Calu3 (cell line): ENCODE measurements at regions of chr3 and their contacts with region 1.

Region 1: GRCh38 chr3:72938471-72939265 is 50.8 kb downstream of the GXYLT2 start:
- DNase-seq: peak; percentile 29
- H3K4me3 Mint-ChIP-seq: no peak overlapping the region
- H3K27ac Mint-ChIP-seq: no peak overlapping the region
- H3K4me1 Mint-ChIP-seq: no peaks in the 10 kb centered on the region
- H3K27me3 Mint-ChIP-seq: peaks cover 13% of the 10 kb centered on the region
- CTCF ChIP-seq: peak; percentile 58

Region 2: DNA sequence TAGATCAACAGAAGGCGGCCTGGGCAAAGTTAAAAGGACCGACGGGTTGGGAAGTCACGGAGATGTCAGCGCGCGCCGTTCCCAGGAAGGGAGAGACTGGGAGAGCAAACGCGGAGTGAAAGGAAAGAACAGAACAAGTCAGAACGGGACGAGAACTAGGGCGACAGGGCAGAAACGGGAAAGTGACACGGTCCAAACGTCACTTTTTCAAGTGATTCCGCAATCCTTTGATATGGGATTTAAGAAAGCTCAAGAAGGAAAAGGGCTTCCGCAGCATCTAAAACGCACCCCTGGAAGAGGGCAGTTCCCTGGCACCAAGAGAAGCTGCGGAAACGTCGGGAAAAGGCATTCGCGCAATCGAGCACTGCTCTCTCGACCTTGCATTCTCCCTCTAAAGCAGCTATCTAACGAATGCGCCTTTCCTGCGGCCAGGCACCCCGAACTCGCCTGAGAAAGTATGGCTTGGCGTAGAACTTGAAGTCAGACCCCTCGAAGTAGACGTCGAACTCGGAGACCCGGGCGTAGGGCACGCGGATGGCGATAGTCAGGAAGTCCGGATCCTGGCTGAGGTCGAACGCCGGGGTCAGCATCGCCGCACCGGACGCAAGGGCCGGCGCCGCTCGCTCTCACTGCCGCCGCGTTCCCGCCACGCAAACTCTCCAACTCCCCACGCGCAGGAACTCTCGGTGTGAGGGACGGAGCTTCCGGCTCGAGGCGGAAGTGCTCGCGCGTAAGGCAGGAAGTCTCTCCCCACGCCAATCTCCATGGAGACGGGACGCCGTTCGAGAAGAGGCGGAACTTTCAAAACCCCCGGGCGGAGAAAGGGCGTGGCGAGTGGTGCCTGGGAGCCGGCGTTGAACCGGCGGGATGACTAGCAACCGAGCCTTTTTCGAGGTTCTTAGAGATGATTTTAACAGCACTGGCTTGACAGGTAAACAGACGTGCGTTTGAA is 90.6 kb before region 1 on chr3 and contains the start of gene SHQ1:
- CTCF ChIA-PET with region 1: interaction called, 3 read pairs
- intact Hi-C with region 1: loop called (anchors 5 kb)
- DNase-seq: peak; percentile 93
- H3K4me3 Mint-ChIP-seq: peak within 1 kb of the TSS; percentile 90
- H3K27ac Mint-ChIP-seq: peak within 1 kb of the TSS; percentile 75
- H3K4me1 Mint-ChIP-seq: peaks cover 24% of the 10 kb centered on the region
- H3K27me3 Mint-ChIP-seq: no peaks in the 10 kb centered on the region
- CTCF ChIP-seq: no peak
- total RNA-seq, gene SHQ1: 19.4 and 22.3 TPM in 2 replicates

Region 3: GRCh38 chr3:72862314-72863090 is 76.2 kb before region 1 on chr3:
- CTCF ChIA-PET with region 1: no interaction called
- intact Hi-C with region 1: no loop called
- DNase-seq: no peak
- H3K4me3 Mint-ChIP-seq: no peak overlapping the region
- H3K27ac Mint-ChIP-seq: no peak overlapping the region
- H3K4me1 Mint-ChIP-seq: no peaks in the 10 kb centered on the region
- H3K27me3 Mint-ChIP-seq: peaks cover 9% of the 10 kb centered on the region
- CTCF ChIP-seq: no peak

Region 4: GRCh38 chr3:72996473-72997333 is 58.0 kb after region 1 on chr3 and contains the start of gene PPP4R2:
- CTCF ChIA-PET with region 1: no interaction called
- intact Hi-C with region 1: loop called (anchors 1 kb)
- DNase-seq: peak; percentile 91
- H3K4me3 Mint-ChIP-seq: peak within 1 kb of the TSS; percentile 96
- H3K27ac Mint-ChIP-seq: peak within 1 kb of the TSS; percentile 89
- H3K4me1 Mint-ChIP-seq: peaks cover 10% of the 10 kb centered on the region
- H3K27me3 Mint-ChIP-seq: no peaks in the 10 kb centered on the region
- CTCF ChIP-seq: no peak
- total RNA-seq, gene PPP4R2: 68.4 and 89.0 TPM in 2 replicates

Region 5: DNA sequence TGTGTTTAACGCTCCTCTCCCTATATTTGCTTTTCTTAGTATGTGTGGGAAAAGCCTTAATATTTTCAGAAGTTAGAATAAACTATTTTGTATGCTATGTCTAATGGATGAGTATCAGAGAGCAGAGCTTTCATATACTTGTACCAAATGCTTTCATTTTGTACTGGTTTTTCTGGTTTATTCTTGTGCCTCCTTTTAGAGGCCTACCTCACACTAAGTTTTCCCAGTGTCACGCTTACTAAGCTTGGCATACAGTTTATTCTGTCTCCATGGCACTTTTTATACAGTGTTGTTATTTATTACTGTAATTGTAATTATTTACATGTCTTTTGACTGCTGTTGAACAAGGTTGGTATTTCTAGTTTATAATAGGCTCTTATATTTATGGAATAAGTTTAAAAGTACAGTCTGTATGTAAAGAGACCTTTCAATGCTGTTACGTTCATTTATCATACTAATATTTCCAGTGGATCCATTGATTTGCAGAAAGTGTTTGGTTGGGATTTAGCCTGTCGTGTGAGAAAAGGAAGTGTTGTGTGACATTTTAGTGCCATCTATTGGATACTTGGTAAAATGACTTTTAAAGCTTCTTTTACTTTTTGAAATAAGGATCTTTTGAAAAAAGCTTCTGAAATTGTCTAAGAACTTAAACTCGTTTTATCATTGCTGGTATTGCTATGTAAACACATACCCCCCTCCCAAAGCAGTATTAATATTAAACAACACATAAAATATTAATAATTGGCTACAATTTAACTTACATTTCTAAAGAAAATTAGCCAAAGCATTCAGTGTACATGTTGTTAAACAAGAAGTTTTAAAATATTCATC is 117.6 kb after region 1 on chr3:
- CTCF ChIA-PET with region 1: interaction called, 12 read pairs
- intact Hi-C with region 1: loop called (anchors 1 kb)
- DNase-seq: no peak
- H3K4me3 Mint-ChIP-seq: no peak overlapping the region
- H3K27ac Mint-ChIP-seq: peak overlapping the region; percentile 68
- H3K4me1 Mint-ChIP-seq: peaks cover 8% of the 10 kb centered on the region
- H3K27me3 Mint-ChIP-seq: no peaks in the 10 kb centered on the region
- CTCF ChIP-seq: no peak

Region 6: DNA sequence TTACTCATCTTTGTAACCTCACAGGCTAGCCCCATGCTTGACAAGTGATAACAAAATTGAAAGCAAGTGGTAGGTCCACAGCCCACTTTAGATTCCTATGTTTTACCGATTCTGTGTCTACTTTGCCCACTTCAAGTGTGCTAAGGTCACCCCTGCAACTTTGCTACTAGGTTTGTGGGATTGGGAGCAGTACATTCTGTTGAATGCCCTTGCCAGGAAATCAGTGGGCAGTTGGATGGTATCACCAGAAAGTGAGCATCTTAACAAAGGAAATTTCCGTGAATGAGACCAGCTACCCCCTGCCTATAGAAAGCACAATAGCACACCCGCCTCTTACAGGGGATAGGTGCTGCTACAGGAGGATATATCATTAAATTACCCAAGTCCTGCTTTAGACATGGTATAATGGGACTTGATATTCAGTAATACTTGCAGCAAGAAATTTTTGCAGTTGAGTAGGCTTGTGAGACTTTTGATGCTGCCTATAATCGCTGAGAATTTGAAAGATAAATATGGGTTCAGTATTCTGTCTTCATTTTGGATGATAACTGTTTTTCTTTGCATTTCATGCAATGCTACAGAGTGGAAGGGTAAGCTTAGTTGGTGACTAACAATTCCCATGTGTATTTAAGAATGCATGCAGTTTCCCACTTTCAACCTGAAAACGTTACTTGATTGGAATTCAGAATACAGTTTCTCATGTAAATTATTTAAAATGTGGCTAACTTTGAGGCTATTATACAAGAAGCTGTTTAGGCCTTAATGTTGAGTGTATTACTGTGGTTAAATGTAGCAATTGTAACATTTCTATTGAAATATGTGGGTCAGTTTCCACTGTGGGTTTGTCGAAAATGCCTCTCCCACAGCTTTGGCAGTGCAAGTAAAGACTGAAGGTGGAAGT is 132.3 kb after region 1 on chr3:
- CTCF ChIA-PET with region 1: no interaction called
- intact Hi-C with region 1: loop called (anchors 5 kb)
- DNase-seq: no peak
- H3K4me3 Mint-ChIP-seq: no peak overlapping the region
- H3K27ac Mint-ChIP-seq: no peak overlapping the region
- H3K4me1 Mint-ChIP-seq: no peaks in the 10 kb centered on the region
- H3K27me3 Mint-ChIP-seq: no peaks in the 10 kb centered on the region
- CTCF ChIP-seq: no peak